ENCODE measurements at regions of chr21 and their contacts with region 1.

Region 1: DNA sequence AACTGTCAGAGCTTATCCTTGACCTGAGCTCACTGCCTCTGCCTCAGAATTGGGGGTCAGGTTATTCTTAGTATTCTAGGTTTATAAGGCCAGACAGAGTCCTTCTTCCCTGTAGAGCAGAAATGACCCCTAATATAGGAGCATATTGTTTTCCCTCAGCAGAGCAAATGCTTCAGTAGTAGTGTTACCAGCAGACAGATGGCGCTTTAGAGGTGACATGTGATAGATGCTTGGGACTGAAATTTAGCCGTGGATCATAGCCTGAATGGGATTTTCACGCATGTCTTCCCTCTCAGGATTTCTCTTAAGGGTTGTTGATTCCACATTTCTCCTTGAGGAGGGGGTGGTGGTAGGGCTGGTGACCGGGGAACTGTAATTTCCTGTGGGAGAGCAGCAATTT is 24.5 kb downstream of the ADARB1 start:
- DNase-seq: no peak
- H3K4me3 Mint-ChIP-seq: no peak overlapping the region
- H3K27ac Mint-ChIP-seq: no peak overlapping the region
- H3K4me1 Mint-ChIP-seq: peaks cover 31% of the 10 kb centered on the region
- H3K27me3 Mint-ChIP-seq: no peaks in the 10 kb centered on the region

Region 2: GRCh38 chr21:45114072-45114471 is 15.2 kb after region 1 on chr21:
- CTCF ChIA-PET with region 1: interaction called, 10 read pairs
- DNase-seq: no peak
- H3K4me3 Mint-ChIP-seq: no peak overlapping the region
- H3K27ac Mint-ChIP-seq: no peak overlapping the region
- H3K4me1 Mint-ChIP-seq: peaks cover 51% of the 10 kb centered on the region
- H3K27me3 Mint-ChIP-seq: peaks cover 3% of the 10 kb centered on the region

Measured in activated naive CD4-positive, alpha-beta T cell treated with anti-CD3 and anti-CD28 coated beads, Interleukin-2, amount 10 ng/mL, durations not matched to agents 7 days and 5 days (primary cell).